ENCODE measurements at regions of chr20 and their contacts with region 1.

Region 1: DNA sequence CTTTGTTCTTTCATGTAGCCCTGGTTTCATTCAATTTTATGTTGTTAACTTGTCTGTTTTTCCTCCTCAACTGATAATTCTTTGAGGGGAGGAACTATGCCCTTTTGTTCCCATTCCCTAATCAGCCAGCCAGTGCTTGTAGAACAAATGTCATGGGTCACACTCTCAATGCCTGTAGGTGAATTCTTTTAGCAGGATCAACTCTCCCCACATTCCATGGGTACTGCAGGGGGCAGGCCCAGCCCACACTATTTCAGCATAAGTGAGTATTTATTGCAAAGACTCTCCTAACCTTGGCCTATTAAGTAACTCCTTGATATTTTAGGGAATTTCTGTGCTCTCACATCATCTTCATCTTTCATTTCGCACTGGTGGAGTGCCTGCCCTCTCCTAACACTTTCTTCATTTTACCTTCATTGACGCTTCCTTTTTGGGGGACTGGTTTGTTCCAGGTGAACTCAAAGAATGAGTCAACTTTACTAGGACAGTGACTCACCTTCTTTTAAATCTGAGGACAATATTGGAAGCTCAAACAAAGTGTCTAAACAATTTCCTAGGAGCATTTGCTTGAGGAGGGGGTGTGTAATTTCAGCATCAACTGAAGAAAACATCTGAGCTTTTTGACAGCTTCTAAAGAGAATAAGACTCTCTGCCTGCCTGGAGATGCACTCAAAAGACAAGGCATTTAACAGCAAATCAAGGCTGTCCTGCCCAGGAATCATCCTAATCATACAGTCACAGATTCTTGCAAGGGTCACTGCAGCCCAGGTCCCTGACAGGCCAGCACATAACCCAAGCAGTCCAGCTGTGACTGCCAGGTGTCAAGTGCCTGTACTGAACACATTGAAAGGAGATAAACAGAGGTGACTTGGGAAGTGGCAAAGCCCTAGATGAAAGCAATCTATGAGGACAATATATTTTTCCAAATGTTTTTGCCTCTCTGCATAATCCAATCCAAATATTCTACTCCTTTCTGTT is 263.9 kb upstream of the PRND start:
- DNase-seq: peak; percentile 56 to 68
- H3K4me3 ChIP-seq: no peak overlapping the region
- H3K4me3 Mint-ChIP-seq: peak overlapping the region; percentile 0
- H3K27ac Mint-ChIP-seq: peak overlapping the region; percentile 2
- H3K4me1 ChIP-seq: peaks cover 49% of the 10 kb centered on the region
- H3K4me1 Mint-ChIP-seq: peaks cover 23% of the 10 kb centered on the region
- H3K27me3 ChIP-seq: no peaks in the 10 kb centered on the region
- H3K27me3 Mint-ChIP-seq: no peaks in the 10 kb centered on the region
- CTCF ChIP-seq: peak in 1 of 2 experiments; percentile 11

Region 2: GRCh38 chr20:4592316-4593148 is 134.7 kb after region 1 on chr20:
- CTCF ChIA-PET with region 1: no interaction called
- POLR2A ChIA-PET with region 1: no interaction called
- intact Hi-C with region 1: loop called (anchors 1 kb)
- DNase-seq: peak; percentile 60 to 87
- H3K4me3 ChIP-seq: peak overlapping the region; percentile 29
- H3K4me3 Mint-ChIP-seq: peak overlapping the region; percentile 66
- H3K27ac Mint-ChIP-seq: no peak overlapping the region
- H3K4me1 ChIP-seq: peaks cover 7% of the 10 kb centered on the region
- H3K4me1 Mint-ChIP-seq: peaks cover 6% of the 10 kb centered on the region
- H3K27me3 ChIP-seq: no peaks in the 10 kb centered on the region
- H3K27me3 Mint-ChIP-seq: no peaks in the 10 kb centered on the region
- CTCF ChIP-seq: peak; percentile 65 to 89